ENCODE measurements at regions of chrX and their contacts with region 1.

Region 1: GRCh38 chrX:7996414-7996813 is 69.2 kb upstream of the PNPLA4 start:
- DNase-seq: no peak
- ATAC-seq: peak; percentile 46; the same call in 1 of the 2 replicates
- H3K4me3 ChIP-seq: no peak overlapping the region
- H3K27ac ChIP-seq: no peak overlapping the region
- H3K4me1 ChIP-seq: no peaks in the 10 kb centered on the region
- H3K27me3 ChIP-seq: no peaks in the 10 kb centered on the region
- CTCF ChIP-seq: peak; percentile 28 to 47 (median 32); a peak in 4 of 6 replicates
- POLR2A ChIP-seq: no peak
- RAD21 ChIP-seq: peak; percentile 51

Region 2: DNA sequence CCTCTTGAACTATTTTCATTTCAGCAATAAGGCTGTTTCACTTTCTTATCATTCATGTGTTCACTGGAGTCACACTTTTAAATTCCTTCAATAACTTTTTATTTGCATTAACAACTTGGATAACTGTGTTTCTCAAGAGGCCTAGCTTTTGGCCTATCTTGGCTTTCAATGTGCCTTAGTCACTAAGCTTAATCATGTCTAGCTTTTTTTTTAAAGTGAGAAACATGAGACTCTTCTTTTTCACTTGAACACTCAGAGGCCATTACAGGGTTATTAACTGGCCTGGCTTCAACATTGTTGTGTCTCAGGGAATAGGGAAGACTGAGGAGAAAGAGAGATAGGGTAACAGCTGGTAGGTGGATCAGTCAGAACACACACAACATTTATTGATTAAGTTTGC is 238.6 kb after region 1 on chrX:
- CTCF ChIA-PET with region 1: no interaction called
- POLR2A ChIA-PET with region 1: no interaction called
- RAD21 ChIA-PET with region 1: no interaction called
- intact Hi-C with region 1: no loop called
- DNase-seq: no peak
- ATAC-seq: no peak
- H3K4me3 ChIP-seq: no peak overlapping the region
- H3K27ac ChIP-seq: no peak overlapping the region
- H3K4me1 ChIP-seq: no peaks in the 10 kb centered on the region
- H3K27me3 ChIP-seq: no peaks in the 10 kb centered on the region
- CTCF ChIP-seq: no peak
- POLR2A ChIP-seq: no peak
- RAD21 ChIP-seq: no peak

Region 3: DNA sequence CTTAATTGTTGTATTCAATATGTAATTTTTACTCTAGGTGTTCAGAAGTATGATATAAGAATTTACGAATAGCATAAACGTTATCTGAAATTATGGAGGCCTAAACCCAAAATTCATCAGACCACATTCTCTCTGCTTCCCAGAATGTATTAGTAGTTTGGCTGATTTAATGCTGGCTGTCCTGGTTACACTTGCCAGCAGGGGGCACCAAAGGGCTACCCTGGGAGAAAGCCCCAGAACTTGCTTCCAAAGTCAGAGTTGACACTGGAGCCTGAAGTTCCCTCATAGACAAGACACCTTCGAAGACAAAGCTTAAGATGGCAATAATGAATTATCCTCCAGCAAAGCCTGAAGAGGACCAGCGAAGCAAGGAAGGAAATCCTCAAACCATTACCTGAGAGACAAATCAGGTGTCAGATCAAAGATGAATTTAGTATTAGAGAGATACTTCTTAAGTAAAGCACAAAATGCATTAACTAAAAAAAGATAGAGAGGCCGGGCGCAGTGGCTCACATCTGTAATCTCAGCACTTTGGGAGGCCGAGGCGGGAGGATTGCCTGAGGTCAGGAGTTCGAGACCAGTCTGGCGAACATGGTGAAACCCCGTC is 746.8 kb after region 1 on chrX:
- CTCF ChIA-PET with region 1: no interaction called
- POLR2A ChIA-PET with region 1: no interaction called
- RAD21 ChIA-PET with region 1: no interaction called
- intact Hi-C with region 1: loop called (anchors 2 kb)
- DNase-seq: no peak
- ATAC-seq: peak; percentile 49; the same call in 1 of the 2 replicates
- H3K4me3 ChIP-seq: no peak overlapping the region
- H3K27ac ChIP-seq: no peak overlapping the region
- H3K4me1 ChIP-seq: no peaks in the 10 kb centered on the region
- H3K27me3 ChIP-seq: no peaks in the 10 kb centered on the region
- CTCF ChIP-seq: peak; percentile 30 to 53 (median 51); a peak in 5 of 6 replicates
- POLR2A ChIP-seq: no peak
- RAD21 ChIP-seq: peak; percentile 47

Region 4: DNA sequence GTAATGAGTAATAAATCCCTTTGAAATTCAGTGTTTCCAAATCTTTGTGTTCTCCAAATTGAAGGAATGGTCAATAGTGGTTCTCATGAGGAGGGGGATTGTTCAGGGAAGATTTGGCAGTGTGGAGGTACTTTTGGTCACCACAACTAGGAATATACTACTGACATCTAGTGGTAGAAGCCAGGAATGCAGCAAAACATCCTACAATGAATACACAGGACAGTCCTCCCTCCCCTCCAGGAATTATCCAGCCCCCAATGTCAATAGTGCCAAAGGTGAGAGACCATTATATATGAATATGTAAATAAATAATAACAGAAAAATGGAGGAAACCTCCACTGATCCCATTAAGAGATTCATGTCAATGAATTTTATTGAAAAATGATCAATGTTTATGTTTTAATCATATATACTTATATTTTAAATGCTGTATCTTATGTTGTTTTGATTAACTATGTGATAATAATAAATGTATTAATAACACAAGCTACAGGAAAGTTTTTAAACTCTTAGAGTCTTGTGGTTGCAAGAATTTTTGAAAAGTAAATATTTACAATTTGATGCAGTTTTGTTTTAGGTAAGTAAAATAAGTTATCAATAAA is 819.2 kb after region 1 on chrX:
- CTCF ChIA-PET with region 1: no interaction called
- POLR2A ChIA-PET with region 1: no interaction called
- RAD21 ChIA-PET with region 1: no interaction called
- intact Hi-C with region 1: loop called (anchors 2 kb)
- DNase-seq: peak; percentile 2
- ATAC-seq: peak; percentile 30; the same call in 1 of the 2 replicates
- H3K4me3 ChIP-seq: no peak overlapping the region
- H3K27ac ChIP-seq: no peak overlapping the region
- H3K4me1 ChIP-seq: no peaks in the 10 kb centered on the region
- H3K27me3 ChIP-seq: no peaks in the 10 kb centered on the region
- CTCF ChIP-seq: peak; percentile 19 to 46 (median 45); a peak in 5 of 6 replicates
- POLR2A ChIP-seq: no peak
- RAD21 ChIP-seq: peak; percentile 39

Measured in HCT116 (cell line).